ENCODE measurements at regions of chr19 and their contacts with region 1.

Region 1: GRCh38 chr19:33406521-33407139 is 33.1 kb downstream of the CEBPG start:
- DNase-seq: peak; percentile 76 to 95
- ATAC-seq: peak; percentile 54 to 89
- H3K4me3 ChIP-seq: no peak overlapping the region
- H3K27ac ChIP-seq: no peak overlapping the region
- H3K4me1 ChIP-seq: peaks cover 8% of the 10 kb centered on the region; the same call in 1 of the 3 replicates
- CTCF ChIP-seq: peak; percentile 99
- EP300 ChIP-seq: no peak
- POLR2A ChIP-seq: no peak
- RAD21 ChIP-seq: peak; percentile 100

Region 2: GRCh38 chr19:33176670-33177416 is 229.8 kb before region 1 on chr19:
- CTCF ChIA-PET with region 1: interaction called, 13 read pairs
- POLR2A ChIA-PET with region 1: interaction called, 3 read pairs
- DNase-seq: peak; percentile 100
- ATAC-seq: peak; percentile 84 to 94
- H3K4me3 ChIP-seq: peak overlapping the region; percentile 65
- H3K27ac ChIP-seq: peak overlapping the region; percentile 89 to 91
- H3K4me1 ChIP-seq: peaks cover 19% of the 10 kb centered on the region
- CTCF ChIP-seq: no peak
- EP300 ChIP-seq: no peak
- POLR2A ChIP-seq: peak; percentile 100
- RAD21 ChIP-seq: 0 out of 5 replicates have a peak, but pooled peaks of 1 of the 2 experiments have one; percentile 16

Region 3: GRCh38 chr19:33226550-33227241 is 179.9 kb before region 1 on chr19:
- CTCF ChIA-PET with region 1: interaction called, 72 read pairs
- POLR2A ChIA-PET with region 1: no interaction called
- DNase-seq: peak; percentile 63 to 67
- ATAC-seq: peak; percentile 32 to 69
- H3K4me3 ChIP-seq: peak overlapping the region; percentile 37
- H3K27ac ChIP-seq: peak overlapping the region; percentile 12 to 56; a peak in 3 of 6 replicates
- H3K4me1 ChIP-seq: peaks cover 16% of the 10 kb centered on the region
- CTCF ChIP-seq: no peak
- EP300 ChIP-seq: no peak
- POLR2A ChIP-seq: no peak
- RAD21 ChIP-seq: no peak

Region 4: DNA sequence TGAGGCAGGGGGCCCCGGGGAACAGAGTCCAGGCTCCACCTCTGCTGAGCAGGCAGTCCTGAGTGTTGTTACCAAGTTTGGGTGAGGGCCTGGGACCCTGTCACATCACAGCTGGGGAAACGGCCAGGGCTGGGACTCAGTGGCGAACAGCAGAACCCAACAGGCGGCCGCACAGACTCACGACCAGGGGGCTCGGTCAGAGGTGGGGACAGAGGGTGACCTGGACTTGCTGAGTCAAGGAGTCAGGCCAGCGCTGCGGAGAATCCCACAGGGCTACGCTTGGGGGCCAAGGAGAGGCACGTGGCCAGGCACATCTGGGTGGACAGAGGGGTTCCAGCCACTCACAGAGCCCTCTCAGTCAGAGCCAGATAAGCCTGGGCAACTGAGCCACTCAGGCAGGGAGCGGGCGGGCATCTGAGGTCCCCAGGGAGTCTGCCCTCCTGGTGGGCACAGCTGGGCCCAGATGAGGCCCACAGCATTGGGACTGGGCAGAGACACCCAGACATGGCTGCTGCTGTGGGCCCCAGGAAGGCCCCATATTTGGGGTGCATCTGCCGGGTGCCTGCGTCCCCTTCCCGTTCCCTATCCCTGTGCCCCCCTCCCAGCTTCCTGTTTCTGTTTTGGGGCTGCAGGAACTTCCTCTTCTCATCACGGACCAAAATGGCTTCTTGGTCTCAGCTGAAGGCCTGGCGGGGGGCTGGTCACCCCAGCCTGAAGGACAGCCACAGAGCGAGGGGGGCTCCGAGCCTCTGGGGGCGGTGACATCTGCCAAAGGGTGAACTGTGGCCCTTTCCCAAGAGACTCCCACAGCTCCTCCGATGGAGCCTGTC is 138.3 kb before region 1 on chr19:
- CTCF ChIA-PET with region 1: interaction called, 44 read pairs
- POLR2A ChIA-PET with region 1: no interaction called
- DNase-seq: no peak
- ATAC-seq: peak in 1 of 2 experiments; percentile 4; a peak in 3 of 6 replicates
- H3K4me3 ChIP-seq: no peak overlapping the region
- H3K27ac ChIP-seq: no peak overlapping the region; a peak in 1 of 6 replicates
- H3K4me1 ChIP-seq: peaks cover under 1% of the 10 kb centered on the region; the same call in 1 of the 3 replicates
- CTCF ChIP-seq: no peak
- EP300 ChIP-seq: no peak
- POLR2A ChIP-seq: no peak
- RAD21 ChIP-seq: no peak

Region 5: DNA sequence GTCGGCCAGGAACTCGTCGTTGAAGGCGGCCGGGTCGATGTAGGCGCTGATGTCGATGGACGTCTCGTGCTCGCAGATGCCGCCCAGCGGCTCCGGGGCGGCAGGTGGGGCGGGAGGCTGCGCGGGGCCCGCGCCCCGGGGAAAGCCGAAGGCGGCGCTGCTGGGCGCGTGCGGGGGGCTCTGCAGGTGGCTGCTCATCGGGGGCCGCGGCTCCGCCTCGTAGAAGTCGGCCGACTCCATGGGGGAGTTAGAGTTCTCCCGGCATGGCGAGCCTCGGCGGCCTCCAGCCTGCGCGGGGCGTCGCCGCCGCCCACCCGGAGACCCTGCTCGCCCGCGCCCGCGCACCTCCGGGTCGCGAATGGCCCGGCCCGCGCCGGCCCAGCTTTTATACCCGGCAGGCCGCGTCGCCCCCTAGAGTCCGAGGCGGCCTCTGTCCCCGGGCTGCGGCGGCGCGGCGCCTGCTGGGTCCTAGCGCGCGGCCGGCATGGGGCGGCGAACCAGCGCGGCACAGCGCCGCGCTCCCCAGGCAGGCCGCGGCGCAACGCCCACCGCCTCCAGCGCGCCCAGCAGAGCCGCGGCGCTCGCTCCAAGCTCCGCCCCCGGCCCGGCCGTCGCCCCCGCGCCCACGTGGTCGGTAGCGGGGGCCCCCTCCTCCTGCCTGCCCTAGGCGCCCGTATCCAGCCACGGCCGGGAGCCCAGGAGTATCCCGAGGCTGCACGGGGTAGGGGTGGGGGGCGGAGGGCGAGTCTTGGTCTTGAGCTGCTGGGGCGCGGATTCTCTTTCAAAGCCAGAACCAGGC is 104.3 kb before region 1 on chr19 and contains the start of gene CEBPA:
- CTCF ChIA-PET with region 1: interaction called, 75 read pairs
- POLR2A ChIA-PET with region 1: interaction called, 8 read pairs
- DNase-seq: peak; percentile 93 to 95
- ATAC-seq: peak; percentile 83 to 92
- H3K4me3 ChIP-seq: peak within 1 kb of the TSS; percentile 63
- H3K27ac ChIP-seq: peak within 1 kb of the TSS; percentile 86 to 93
- H3K4me1 ChIP-seq: peaks cover 11% of the 10 kb centered on the region
- CTCF ChIP-seq: peak; percentile 99
- EP300 ChIP-seq: no peak
- POLR2A ChIP-seq: peak; percentile 100
- RAD21 ChIP-seq: no peak; a peak in 3 of 5 replicates
- polyA plus RNA-seq, gene CEBPA: 3.5 and 4.3 TPM in 2 replicates

Region 6: DNA sequence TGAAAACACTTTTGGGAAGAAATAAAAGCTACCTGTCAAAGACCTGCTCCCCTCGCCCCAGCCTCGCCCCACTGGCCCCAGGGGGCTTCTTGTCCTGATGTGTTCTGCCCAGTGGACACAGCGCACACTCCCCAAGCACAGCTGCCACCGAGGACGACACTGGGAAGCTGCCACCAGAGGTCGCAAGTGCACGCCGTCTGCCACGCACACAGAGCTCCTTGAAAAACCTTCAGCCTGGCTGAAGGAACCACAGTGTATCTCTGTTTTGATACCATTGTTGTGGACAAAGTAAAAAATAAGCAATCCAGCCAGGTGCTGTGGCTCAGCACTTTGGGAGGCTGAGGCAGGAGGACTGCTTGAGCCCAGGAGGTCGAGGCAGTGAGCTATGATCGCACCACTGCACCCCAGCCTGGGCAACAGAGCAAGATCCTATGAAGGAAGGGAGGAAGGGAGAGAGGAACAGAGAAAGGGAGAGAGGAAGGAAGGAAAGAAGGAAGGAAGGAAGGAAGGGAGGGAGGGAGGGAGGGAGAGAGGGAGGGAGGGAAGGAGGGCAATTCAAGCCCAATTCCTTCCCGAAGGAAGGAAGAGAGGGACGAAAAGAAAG is 24.1 kb after region 1 on chr19:
- CTCF ChIA-PET with region 1: interaction called, 253 read pairs
- POLR2A ChIA-PET with region 1: no interaction called
- DNase-seq: peak; percentile 80 to 93
- ATAC-seq: peak; percentile 90 to 98
- H3K4me3 ChIP-seq: no peak overlapping the region
- H3K27ac ChIP-seq: no peak overlapping the region
- H3K4me1 ChIP-seq: no peaks in the 10 kb centered on the region
- CTCF ChIP-seq: peak; percentile 98
- EP300 ChIP-seq: no peak
- POLR2A ChIP-seq: no peak
- RAD21 ChIP-seq: peak; percentile 90 to 95

Region 7: DNA sequence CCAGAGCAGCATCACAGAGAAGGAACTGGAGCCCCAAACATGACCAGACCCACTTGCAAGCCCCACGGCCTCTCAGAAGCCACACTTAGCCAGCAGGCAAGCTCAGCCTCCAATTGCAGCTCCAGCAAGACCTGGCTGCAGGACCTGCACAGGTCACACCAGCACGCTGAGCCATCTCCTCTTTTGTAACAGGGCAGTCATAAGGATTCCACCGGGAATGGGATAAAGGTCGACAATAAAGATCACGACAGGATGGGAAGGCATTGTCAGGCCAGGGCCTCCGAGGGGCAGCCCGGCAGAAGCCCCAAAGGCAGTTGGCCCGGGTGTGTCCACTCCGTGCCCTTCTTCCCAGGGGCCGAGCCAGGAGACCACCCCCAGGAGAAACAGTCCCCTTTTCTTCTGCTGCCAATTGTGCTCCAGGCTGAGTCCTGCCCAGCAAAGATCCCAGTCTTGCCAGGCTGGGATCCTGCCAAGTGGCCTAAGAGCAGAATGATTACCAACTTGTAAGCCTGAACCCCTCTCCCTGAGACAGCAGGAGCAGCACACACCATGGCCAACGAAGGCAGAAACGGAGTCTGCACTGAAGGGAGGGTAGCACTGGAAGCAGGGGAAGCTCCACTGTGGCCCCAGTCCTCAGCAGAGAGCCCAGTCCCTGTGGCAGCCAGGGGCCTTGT is 102.4 kb after region 1 on chr19:
- CTCF ChIA-PET with region 1: no interaction called
- POLR2A ChIA-PET with region 1: no interaction called
- DNase-seq: no peak
- ATAC-seq: no peak; a peak in 1 of 6 replicates
- H3K4me3 ChIP-seq: no peak overlapping the region
- H3K27ac ChIP-seq: no peak overlapping the region
- H3K4me1 ChIP-seq: no peaks in the 10 kb centered on the region
- CTCF ChIP-seq: no peak
- EP300 ChIP-seq: no peak
- POLR2A ChIP-seq: no peak
- RAD21 ChIP-seq: no peak

Measured in A549 (cell line).